ENCODE measurements at regions of chr6 and their contacts with region 1.

Region 1: GRCh38 chr6:154675602-154676088 is 57.6 kb upstream of the SCAF8 start:
- DNase-seq: peak; percentile 93
- H3K4me3 ChIP-seq: no peak overlapping the region
- H3K27ac ChIP-seq: no peak overlapping the region
- H3K4me1 ChIP-seq: no peaks in the 10 kb centered on the region
- H3K27me3 ChIP-seq: no peaks in the 10 kb centered on the region
- CTCF ChIP-seq: peak; percentile 99

Region 2: GRCh38 chr6:154622618-154623336 is 52.9 kb before region 1 on chr6:
- intact Hi-C with region 1: no loop called
- DNase-seq: no peak
- H3K4me3 ChIP-seq: no peak overlapping the region
- H3K27ac ChIP-seq: no peak overlapping the region
- H3K4me1 ChIP-seq: no peaks in the 10 kb centered on the region
- H3K27me3 ChIP-seq: no peaks in the 10 kb centered on the region
- CTCF ChIP-seq: no peak

Region 3: DNA sequence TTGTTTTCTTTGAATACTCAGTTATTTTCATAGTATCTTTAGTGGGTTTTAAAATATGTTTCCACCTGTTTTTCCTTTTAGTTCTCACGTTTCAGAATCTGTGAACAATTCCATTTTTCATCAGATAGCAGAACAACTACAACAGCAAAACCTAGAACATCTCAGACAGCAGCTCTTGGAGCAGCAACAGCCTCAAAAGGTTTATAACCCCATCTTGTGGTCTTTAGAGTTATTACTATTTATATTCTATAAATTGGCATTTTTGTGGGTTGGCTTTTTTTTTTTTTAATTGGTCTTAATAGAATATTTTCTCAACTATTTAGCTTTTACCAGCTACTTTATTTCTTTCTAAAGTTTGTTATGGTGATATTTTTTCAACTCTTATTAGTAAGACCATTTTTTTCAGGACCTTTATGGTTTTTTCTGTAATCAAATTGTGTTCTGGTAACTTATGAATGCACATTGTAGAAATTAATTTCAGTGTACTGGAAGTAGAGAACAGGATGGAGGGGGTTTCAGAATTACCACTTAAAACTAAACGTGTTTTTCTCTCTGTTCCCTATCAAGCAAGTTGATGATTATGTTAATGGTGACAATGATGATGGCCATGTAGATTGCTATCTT is 129.8 kb after region 1 on chr6:
- intact Hi-C with region 1: loop called (anchors 5 kb)
- DNase-seq: no peak
- H3K4me3 ChIP-seq: no peak overlapping the region
- H3K27ac ChIP-seq: no peak overlapping the region
- H3K4me1 ChIP-seq: no peaks in the 10 kb centered on the region
- H3K27me3 ChIP-seq: no peaks in the 10 kb centered on the region
- CTCF ChIP-seq: no peak

Region 4: GRCh38 chr6:154928325-154928922 is 252.8 kb after region 1 on chr6:
- intact Hi-C with region 1: loop called (anchors 5 kb)
- DNase-seq: peak; percentile 70
- H3K4me3 ChIP-seq: no peak overlapping the region
- H3K27ac ChIP-seq: no peak overlapping the region
- H3K4me1 ChIP-seq: no peaks in the 10 kb centered on the region
- H3K27me3 ChIP-seq: no peaks in the 10 kb centered on the region
- CTCF ChIP-seq: peak; percentile 54

Region 5: DNA sequence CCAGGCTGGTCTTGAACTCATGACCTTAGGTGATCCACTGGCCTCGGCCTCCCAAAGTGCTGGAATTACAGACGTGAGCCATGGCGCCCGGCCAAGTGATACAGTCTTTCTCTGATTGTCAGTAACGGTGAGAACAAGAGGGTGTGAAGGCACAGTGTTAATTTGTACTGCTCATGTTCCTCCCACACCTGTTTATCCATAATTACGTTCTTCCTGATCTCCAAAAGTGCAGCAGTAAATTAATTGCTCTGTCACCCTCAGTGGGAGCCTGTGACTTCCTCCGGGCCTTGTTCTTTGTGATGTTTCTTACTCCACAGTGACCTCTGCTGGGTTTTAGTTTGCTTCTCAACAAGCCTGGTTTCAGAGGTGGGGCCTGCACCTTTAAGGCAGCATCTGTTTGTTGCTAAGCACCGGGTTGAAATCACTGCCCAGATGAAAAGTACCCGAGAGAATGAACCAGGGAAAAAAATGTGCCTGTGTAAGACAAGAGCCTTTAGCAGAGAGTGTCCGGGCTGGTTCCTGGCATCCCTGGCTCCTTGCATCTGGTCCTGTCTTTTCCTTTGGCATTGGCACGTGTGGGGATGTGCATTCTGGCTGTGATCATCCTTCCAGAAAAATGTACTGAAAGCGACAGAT is 499.0 kb after region 1 on chr6:
- intact Hi-C with region 1: loop called (anchors 10 kb)
- DNase-seq: peak; percentile 71
- H3K4me3 ChIP-seq: no peak overlapping the region
- H3K27ac ChIP-seq: no peak overlapping the region
- H3K4me1 ChIP-seq: peaks cover 8% of the 10 kb centered on the region
- H3K27me3 ChIP-seq: no peaks in the 10 kb centered on the region
- CTCF ChIP-seq: peak; percentile 46

Measured in colonic mucosa (tissue), 4 donors.